Astrocyte of the cerebellum (primary cell): ENCODE measurements at regions of chr6 and their contacts with region 1.

Region 1: GRCh38 chr6:108492131-108492766 is 68.5 kb upstream of the FOXO3 start:
- DNase-seq: peak; percentile 53
- H3K4me3 ChIP-seq: no peak overlapping the region
- CTCF ChIP-seq: peak; percentile 69

Region 2: DNA sequence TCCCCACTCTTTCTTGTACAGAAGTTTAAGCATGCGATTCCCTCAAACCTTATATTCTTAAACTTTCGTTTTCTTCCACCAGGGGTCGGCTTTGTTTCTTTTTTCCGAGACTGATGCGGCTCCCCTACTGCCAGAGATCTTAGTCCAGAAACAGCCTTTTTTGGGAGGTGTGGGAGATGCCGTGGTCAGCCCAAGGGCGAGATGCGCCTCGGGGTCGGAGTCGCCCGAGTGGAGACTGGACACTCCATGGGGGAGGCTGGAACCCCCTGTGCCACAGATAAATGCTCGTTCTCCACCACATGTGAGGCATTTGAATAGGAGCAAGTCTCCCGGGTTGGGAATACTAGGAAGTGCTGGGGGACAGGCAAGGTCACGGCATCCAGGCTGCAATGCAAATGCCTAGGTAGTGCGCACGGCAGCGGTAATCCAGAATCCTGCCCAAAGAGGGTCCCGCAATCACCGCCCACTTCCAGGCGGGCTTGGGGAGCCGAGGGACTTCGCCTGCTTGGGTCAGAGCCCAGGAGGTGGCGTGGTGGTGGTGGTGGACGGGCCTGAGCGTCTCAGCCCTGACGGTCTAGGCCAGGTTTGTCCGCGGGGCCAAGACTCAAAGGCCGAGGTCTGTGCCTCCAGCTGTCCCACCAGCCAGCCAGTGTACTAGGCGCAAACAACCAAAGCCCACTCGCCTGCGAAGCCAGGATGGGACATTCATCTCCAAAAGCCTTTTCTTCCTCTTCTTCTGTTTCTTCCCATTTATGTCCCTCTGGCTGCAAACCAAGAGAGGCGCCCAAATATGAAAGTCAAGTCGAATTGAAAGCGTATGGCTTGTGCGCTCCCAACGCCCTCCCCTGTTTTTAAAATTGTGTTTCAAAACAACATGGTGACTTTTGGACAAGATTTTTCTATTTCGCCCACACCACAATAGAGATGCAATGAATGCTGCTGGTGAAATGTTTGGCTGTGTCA is 378.4 kb before region 1 on chr6:
- in situ Hi-C with region 1: loop called (anchors 10 kb)
- DNase-seq: peak; percentile 53
- H3K4me3 ChIP-seq: peak overlapping the region; percentile 17
- CTCF ChIP-seq: peak; percentile 55